ENCODE measurements at regions of chr14 and their contacts with region 1.

Region 1: DNA sequence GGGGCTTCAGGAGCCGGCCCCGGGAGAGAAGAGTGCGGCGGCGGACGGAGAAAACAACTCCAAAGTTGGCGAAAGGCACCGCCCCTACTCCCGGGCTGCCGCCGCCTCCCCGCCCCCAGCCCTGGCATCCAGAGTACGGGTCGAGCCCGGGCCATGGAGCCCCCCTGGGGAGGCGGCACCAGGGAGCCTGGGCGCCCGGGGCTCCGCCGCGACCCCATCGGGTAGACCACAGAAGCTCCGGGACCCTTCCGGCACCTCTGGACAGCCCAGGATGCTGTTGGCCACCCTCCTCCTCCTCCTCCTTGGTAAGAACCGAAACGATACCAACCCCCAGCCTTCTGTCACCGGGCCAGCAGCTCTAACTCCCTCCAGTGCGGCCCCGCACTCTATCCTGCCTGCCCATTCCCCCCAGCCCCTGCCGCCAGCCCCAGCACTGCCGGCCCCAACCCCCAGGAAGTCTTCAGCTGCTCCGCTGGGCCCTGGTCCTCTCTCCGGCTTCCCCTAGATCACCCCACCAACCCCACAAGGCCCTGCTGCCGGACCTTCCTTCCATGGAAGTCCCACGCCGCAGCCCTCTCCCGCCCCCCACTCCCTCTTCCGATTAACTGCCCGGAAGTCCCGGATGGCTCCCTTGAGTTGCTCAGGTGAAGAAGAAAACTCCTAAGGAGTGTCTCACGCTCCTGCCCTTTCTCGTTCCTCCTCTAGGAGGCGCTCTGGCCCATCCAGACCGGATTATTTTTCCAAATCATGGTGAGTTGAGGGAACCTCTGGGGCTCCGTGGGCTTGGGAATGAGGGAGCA is 693 bp downstream of the LRP10 start:
- DNase-seq: peak; percentile 47 to 82 (median 73)
- ATAC-seq: peak; percentile 46
- H3K4me3 ChIP-seq: peak overlapping the region; percentile 82 to 83
- H3K4me3 Mint-ChIP-seq: peak overlapping the region; percentile 91
- H3K27ac ChIP-seq: peak overlapping the region; percentile 85 to 94
- H3K27ac Mint-ChIP-seq: peak overlapping the region; percentile 99
- H3K4me1 ChIP-seq: peaks cover 28% of the 10 kb centered on the region
- H3K4me1 Mint-ChIP-seq: peaks cover 36% of the 10 kb centered on the region
- H3K27me3 ChIP-seq: no peaks in the 10 kb centered on the region
- H3K27me3 Mint-ChIP-seq: no peaks in the 10 kb centered on the region
- CTCF ChIP-seq: peak; percentile 86

Region 2: GRCh38 chr14:22614224-22614799 is 257.9 kb before region 1 on chr14:
- CTCF ChIA-PET with region 1: no interaction called
- POLR2A ChIA-PET with region 1: no interaction called
- intact Hi-C with region 1: no loop called
- DNase-seq: no peak
- ATAC-seq: no peak
- H3K4me3 ChIP-seq: no peak overlapping the region
- H3K4me3 Mint-ChIP-seq: no peak overlapping the region
- H3K27ac ChIP-seq: no peak overlapping the region
- H3K27ac Mint-ChIP-seq: no peak overlapping the region
- H3K4me1 ChIP-seq: no peaks in the 10 kb centered on the region
- H3K4me1 Mint-ChIP-seq: no peaks in the 10 kb centered on the region
- H3K27me3 ChIP-seq: no peaks in the 10 kb centered on the region
- H3K27me3 Mint-ChIP-seq: no peaks in the 10 kb centered on the region
- CTCF ChIP-seq: no peak

Region 3: GRCh38 chr14:22748631-22749068 is 123.6 kb before region 1 on chr14:
- CTCF ChIA-PET with region 1: no interaction called
- POLR2A ChIA-PET with region 1: no interaction called
- intact Hi-C with region 1: no loop called
- DNase-seq: peak in 1 of 9 experiments; percentile 15
- ATAC-seq: no peak
- H3K4me3 ChIP-seq: no peak overlapping the region
- H3K4me3 Mint-ChIP-seq: no peak overlapping the region
- H3K27ac ChIP-seq: no peak overlapping the region
- H3K27ac Mint-ChIP-seq: no peak overlapping the region
- H3K4me1 ChIP-seq: no peaks in the 10 kb centered on the region
- H3K4me1 Mint-ChIP-seq: peaks cover 10% of the 10 kb centered on the region
- H3K27me3 ChIP-seq: peaks cover 0 to 2% of the 10 kb centered on the region in 2 experiments
- H3K27me3 Mint-ChIP-seq: peaks cover 38% of the 10 kb centered on the region
- CTCF ChIP-seq: no peak

Region 4: GRCh38 chr14:22822571-22823098 is 49.6 kb before region 1 on chr14:
- CTCF ChIA-PET with region 1: interaction called, 35 read pairs
- POLR2A ChIA-PET with region 1: interaction called, 3 read pairs
- intact Hi-C with region 1: no loop called
- DNase-seq: peak; percentile 41 to 85 (median 76)
- ATAC-seq: peak; percentile 89
- H3K4me3 ChIP-seq: peak overlapping the region; percentile 26 to 35
- H3K4me3 Mint-ChIP-seq: peak overlapping the region; percentile 61
- H3K27ac ChIP-seq: no peak overlapping the region
- H3K27ac Mint-ChIP-seq: no peak overlapping the region
- H3K4me1 ChIP-seq: peaks cover 10% of the 10 kb centered on the region
- H3K4me1 Mint-ChIP-seq: peaks cover 16% of the 10 kb centered on the region
- H3K27me3 ChIP-seq: peaks cover 4 to 21% of the 10 kb centered on the region in 2 experiments
- H3K27me3 Mint-ChIP-seq: peaks cover 23% of the 10 kb centered on the region
- CTCF ChIP-seq: peak; percentile 81

Region 5: DNA sequence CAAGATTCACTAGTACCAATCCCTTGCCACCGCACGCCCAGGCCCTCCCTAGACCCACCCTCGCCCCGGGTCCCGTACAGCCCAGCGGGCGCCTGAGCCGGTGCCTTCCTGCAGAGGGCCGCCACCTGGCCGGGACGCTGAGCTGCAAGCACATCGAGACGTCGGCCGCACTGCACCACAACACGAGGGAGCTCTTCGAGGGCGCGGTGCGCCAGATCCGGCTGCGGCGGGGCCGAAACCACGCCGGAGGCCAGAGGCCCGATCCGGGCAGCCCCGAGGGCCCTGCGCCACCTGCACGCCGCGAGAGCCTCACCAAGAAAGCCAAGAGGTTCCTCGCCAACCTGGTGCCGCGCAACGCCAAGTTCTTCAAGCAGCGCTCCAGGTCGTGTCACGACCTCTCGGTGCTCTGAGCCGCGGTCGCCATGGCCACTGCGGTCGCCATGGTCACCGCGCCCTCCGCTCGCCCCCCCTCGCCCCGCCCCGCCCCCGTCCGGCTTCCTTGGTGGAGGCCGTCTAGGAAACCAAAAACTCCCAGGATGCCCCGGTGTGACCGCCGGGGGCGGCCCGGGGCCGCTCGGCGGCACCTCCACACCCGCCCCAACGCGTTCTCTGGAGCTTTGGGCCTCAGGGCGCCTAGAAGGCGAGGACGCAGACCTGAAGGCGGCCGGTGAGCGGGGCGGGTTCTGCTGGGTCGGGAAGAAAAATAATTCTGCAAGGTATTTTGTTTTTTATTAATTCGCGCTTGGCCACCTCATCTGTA is 14.4 kb after region 1 on chr14:
- CTCF ChIA-PET with region 1: interaction called, 91 read pairs
- POLR2A ChIA-PET with region 1: interaction called, 28 read pairs
- intact Hi-C with region 1: loop called (anchors 1 kb)
- DNase-seq: peak; percentile 34 to 85 (median 71)
- ATAC-seq: peak; percentile 67
- H3K4me3 ChIP-seq: peak overlapping the region; percentile 40 to 44
- H3K4me3 Mint-ChIP-seq: peak overlapping the region; percentile 81
- H3K27ac ChIP-seq: peak overlapping the region; percentile 29 to 39
- H3K27ac Mint-ChIP-seq: peak overlapping the region; percentile 74
- H3K4me1 ChIP-seq: peaks cover 45% of the 10 kb centered on the region
- H3K4me1 Mint-ChIP-seq: peaks cover 56% of the 10 kb centered on the region
- H3K27me3 ChIP-seq: peaks cover 0 to 2% of the 10 kb centered on the region in 2 experiments
- H3K27me3 Mint-ChIP-seq: no peaks in the 10 kb centered on the region
- CTCF ChIP-seq: no peak

Region 6: GRCh38 chr14:22918804-22919600 is 46.8 kb after region 1 on chr14 and contains the start of gene RBM23:
- CTCF ChIA-PET with region 1: interaction called, 31 read pairs
- POLR2A ChIA-PET with region 1: interaction called, 11 read pairs
- intact Hi-C with region 1: loop called (anchors 1 to 5 kb)
- DNase-seq: peak; percentile 98 to 100 (median 100)
- ATAC-seq: peak; percentile 91
- H3K4me3 ChIP-seq: peak within 1 kb of the TSS; percentile 59 to 88
- H3K4me3 Mint-ChIP-seq: peak within 1 kb of the TSS; percentile 91
- H3K27ac ChIP-seq: peak within 1 kb of the TSS; percentile 100
- H3K27ac Mint-ChIP-seq: peak within 1 kb of the TSS; percentile 99
- H3K4me1 ChIP-seq: peaks cover 30% of the 10 kb centered on the region
- H3K4me1 Mint-ChIP-seq: peaks cover 42% of the 10 kb centered on the region
- H3K27me3 ChIP-seq: no peaks in the 10 kb centered on the region
- H3K27me3 Mint-ChIP-seq: no peaks in the 10 kb centered on the region
- CTCF ChIP-seq: no peak
- total RNA-seq, gene RBM23: 135 to 141 TPM